ENCODE measurements at regions of chr6 and their contacts with region 1.

Region 1: GRCh38 chr6:92748131-92748530 is 671.2 kb downstream of the EPHA7 start:
- DNase-seq: no peak

Region 2: DNA sequence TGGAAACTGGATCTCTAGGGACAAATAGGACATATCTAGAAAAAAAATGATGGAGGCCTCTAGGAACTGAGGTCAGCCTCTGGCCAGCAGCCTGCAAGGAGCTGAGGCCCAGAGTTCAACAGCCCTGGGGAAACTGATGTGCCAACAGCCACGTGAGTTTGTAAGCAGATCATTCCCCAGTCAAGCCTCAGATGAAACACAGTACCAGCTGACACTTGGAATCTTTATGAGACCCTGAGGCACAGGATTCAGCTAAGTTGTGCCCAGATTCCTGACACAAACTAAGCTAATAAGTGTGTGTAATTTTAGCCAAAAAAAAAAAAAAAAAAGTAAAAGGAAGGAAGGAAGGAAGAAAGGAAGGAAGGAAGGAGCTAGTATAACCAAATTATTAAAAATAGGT is 1101.5 kb before region 1 on chr6:
- intact Hi-C with region 1: loop called in 1 of 2 experiments (anchors 5 kb)
- DNase-seq: no peak

Region 3: GRCh38 chr6:92779746-92780145 is 31.6 kb after region 1 on chr6:
- intact Hi-C with region 1: loop called in 1 of 2 experiments (anchors 2 kb)
- DNase-seq: no peak